ENCODE measurements at regions of chr12 and their contacts with region 1.

Region 1: DNA sequence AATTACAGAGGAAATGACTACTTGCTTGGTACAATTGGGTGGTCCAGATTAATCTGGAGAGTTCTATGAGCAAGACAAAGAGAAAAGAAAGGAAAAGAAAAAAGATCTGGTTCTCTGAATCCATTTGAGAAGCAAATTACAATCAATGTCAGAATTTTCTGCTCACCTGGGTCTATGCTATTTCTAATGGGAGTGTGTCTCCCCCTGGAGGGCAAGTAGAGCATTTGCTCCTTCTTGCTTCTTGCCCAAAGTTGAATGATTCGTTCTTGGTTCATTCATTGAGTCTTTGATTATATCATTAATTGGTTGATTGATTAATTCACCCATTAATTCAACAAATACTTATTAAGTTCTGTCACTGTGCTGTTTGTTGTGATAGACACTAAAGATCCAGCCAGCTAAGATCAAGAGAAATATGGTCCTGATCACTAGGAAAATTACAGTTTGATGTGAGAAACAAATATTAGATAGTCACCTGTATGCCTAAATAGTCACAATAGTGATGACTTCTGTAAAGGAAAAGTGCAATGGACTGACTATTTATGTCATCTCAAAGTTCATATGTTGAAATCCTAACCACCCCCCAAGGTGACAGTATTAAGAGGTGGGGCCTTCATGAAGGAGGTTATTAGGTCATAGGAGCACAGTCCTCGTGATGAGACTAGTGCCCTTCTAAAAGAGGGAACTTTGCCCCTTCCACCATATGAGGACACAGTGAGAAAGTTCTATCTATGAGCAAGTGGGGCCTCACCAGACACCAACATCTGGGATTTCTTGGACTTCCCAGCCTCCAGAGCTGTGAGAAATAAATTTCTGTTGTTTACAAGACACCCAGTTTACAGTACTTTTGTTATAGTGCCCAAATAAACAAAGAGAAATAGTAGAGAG is 8.0 kb upstream of the ASB8 start:
- DNase-seq: peak; percentile 59
- CTCF ChIP-seq: peak; percentile 87

Region 2: DNA sequence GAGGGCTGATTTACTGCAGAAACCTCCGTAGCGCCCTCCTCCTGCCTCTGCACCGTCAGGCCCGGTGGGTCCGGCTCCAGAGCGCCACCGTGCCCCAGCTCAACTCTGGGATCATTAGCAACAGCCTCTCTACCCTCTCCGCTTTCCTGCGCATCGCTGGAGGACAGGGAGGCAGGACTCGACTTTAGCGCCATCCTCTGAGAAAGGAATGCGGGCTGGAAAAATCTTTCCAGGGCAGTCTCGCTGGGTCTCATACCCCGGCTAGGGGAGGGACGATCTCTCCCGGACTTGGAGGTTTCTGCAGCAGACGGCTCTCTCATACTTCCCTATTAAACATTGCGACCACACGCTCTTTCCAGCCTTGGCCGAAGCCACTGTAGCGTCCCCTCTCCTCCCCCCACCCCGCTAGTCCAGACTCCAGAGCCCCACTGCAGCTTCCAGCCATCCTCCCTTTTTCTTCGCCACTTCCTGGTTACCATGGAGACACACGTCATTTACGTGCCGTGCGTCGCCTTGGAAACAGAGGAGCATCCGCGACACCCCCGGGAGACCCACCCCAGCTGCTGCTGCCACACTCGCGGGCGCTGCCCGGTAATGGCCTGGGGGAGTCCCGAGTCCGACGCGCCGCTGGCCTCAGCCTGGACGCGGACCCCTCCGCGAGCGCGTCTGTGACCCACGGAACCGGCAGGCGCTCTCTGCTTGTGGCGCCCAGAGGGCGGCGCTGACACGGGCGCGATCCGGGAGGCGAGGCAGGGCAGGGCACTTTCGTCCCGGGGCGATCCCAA is 17.9 kb after region 1 on chr12 and contains the start of gene CCDC184:
- CTCF ChIA-PET with region 1: interaction called, 17 read pairs
- POLR2A ChIA-PET with region 1: no interaction called
- DNase-seq: peak; percentile 82
- CTCF ChIP-seq: peak; percentile 33

Measured in GM10248 (cell line).